H1 (cell line): ENCODE measurements at regions of chr14 and their contacts with region 1.

Region 1: GRCh38 chr14:55416866-55417265 is 5.2 kb upstream of the ATG14 start:
- DNase-seq: peak in 1 of 2 experiments; percentile 58
- H3K4me3 ChIP-seq: no peak overlapping the region
- H3K27ac ChIP-seq: no peak overlapping the region
- H3K4me1 ChIP-seq: no peaks in the 10 kb centered on the region; a peak in 1 of 7 replicates
- H3K27me3 ChIP-seq: no peaks in the 10 kb centered on the region
- CTCF ChIP-seq: peak; percentile 49 to 72 (median 60)
- EP300 ChIP-seq: no peak
- POLR2A ChIP-seq: no peak
- RAD21 ChIP-seq: peak; percentile 64 to 75

Region 2: GRCh38 chr14:55430024-55430690 is 13.3 kb after region 1 on chr14:
- CTCF ChIA-PET with region 1: interaction called, 65 read pairs
- POLR2A ChIA-PET with region 1: interaction called, 3 read pairs
- DNase-seq: no peak
- H3K4me3 ChIP-seq: no peak overlapping the region
- H3K27ac ChIP-seq: no peak overlapping the region; the same call in 1 of the 2 replicates
- H3K4me1 ChIP-seq: peaks cover 0 to 3% (median 0%) of the 10 kb centered on the region in 4 experiments; a peak in 3 of 7 replicates
- H3K27me3 ChIP-seq: no peaks in the 10 kb centered on the region
- CTCF ChIP-seq: peak in 2 of 3 experiments; percentile 20 to 61; a peak in 2 of 4 replicates
- EP300 ChIP-seq: 0 out of 3 replicates have a peak, but pooled peaks of 1 of the 2 experiments have one; percentile 2
- POLR2A ChIP-seq: no peak
- RAD21 ChIP-seq: peak; percentile 46 to 47

Region 3: DNA sequence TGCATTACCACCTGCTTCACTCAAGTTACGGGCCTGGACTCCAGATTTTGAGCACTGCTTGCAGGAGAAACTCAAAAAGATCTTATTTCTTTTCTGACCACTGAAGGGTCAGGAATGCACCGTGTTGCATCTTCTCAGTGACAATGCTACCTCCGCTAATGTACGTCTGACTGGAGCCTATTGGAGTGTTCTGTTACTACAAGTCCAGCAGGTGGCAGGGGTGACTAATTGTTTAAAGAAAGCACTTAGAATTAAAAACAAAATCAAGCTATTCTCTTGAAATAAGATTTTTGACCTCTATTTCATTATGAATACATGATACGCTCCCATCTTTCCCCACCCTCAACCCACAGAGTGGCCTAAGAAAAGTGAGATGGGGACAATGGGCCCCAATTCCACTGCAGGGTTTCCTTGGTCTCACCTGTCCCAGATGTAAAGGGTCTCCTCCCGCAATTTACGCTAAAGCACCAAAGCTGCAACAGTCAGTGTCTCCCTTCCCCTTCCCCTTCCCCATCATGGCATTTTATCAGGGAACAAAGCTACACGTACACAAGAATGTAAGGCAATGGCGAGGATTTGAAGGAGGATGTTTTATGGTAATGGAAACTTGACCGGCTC is 21.3 kb after region 1 on chr14:
- CTCF ChIA-PET with region 1: interaction called, 49 read pairs
- POLR2A ChIA-PET with region 1: no interaction called
- DNase-seq: no peak
- H3K4me3 ChIP-seq: no peak overlapping the region
- H3K27ac ChIP-seq: no peak overlapping the region
- H3K4me1 ChIP-seq: no peaks in the 10 kb centered on the region; a peak in 2 of 7 replicates
- H3K27me3 ChIP-seq: no peaks in the 10 kb centered on the region
- CTCF ChIP-seq: peak in 2 of 3 experiments; percentile 55 to 56; a peak in 3 of 4 replicates
- EP300 ChIP-seq: no peak
- POLR2A ChIP-seq: no peak
- RAD21 ChIP-seq: peak; percentile 68 to 79